Heart left ventricle (tissue), 16 donors: ENCODE measurements at regions of chr1 and their contacts with region 1.

Region 1: GRCh38 chr1:111346089-111346885 is 55.6 kb downstream of the CHIA start:
- DNase-seq: peak; percentile 76 to 89 (median 81)
- ATAC-seq: peak; percentile 93 to 98 (median 96)
- H3K4me3 ChIP-seq: peak overlapping the region; percentile 26 to 80 (median 56)
- H3K27ac ChIP-seq: peak overlapping the region; percentile 49 to 85 (median 74)
- H3K4me1 ChIP-seq: peaks cover 0 to 13% (median 0%) of the 10 kb centered on the region in 12 donors
- H3K27me3 ChIP-seq: no peaks in the 10 kb centered on the region
- CTCF ChIP-seq: peak in 5 of 12 donors; percentile 17 to 31 (median 22)
- POLR2A ChIP-seq: peak in 1 of 2 donors; percentile 33

Region 2: DNA sequence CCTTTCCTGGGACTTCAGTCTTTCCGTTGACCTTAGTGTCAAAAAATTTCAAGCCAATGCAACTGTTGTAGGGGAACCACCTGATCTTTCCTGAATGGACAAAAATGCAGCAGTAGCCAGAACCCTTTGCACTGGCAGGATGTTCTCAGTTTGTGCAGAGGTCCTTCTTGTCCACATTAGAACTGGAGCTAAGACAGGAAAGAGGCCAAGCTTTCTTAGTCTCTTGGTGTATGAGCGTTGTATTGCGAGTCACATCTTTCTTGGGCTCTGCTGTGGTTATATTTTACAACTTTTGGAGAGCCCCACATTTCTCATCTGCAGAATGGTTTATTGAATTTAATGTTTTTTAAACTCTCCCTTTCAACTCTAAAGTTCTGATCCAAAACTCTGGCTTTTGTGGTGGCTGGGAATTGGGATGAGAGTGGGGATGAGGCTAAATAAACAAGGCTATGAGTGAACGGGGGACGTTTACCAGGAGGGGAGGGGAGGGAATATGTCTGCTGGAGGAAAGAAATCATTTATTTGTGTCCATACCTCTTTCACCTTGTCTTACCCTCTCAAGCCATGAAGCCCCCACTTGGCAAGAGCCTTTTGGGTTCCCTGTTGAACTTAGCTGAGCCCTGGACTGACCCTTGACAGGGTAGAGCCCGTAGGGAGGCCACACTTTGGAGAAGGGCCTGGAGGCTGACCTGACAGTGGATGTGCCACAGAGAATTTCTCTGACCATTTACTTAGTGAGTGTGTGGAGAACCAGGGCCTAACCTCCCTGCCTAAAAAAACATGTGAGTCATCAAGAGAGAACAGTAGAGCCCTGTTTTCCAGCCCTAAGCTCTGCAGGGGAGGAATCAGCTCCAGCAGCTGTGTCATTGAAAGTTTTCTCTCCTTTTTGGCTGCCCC is 118.2 kb before region 1 on chr1:
- intact Hi-C with region 1: loop called in 1 of 10 experiments (anchors 5 kb)
- DNase-seq: peak in 4 of 5 donors; percentile 26 to 54 (median 38)
- ATAC-seq: peak; percentile 82 to 98 (median 95)
- H3K4me3 ChIP-seq: no peak overlapping the region
- H3K27ac ChIP-seq: peak overlapping the region in 9 of 12 donors; percentile 6 to 75 (median 50)
- H3K4me1 ChIP-seq: peaks cover 0 to 37% (median 2%) of the 10 kb centered on the region in 12 donors
- H3K27me3 ChIP-seq: no peaks in the 10 kb centered on the region
- CTCF ChIP-seq: no peak
- POLR2A ChIP-seq: no peak